Activated CD4-positive, alpha-beta T cell treated with anti-CD3 and anti-CD28 coated beads for 36 hours (primary cell): ENCODE measurements at regions of chr5 and their contacts with region 1.

Region 1: GRCh38 chr5:76269932-76270610 is 133.0 kb upstream of the IQGAP2 start:
- DNase-seq: peak; percentile 67
- ATAC-seq: peak; percentile 78
- H3K4me3 Mint-ChIP-seq: peak overlapping the region; percentile 52
- H3K27ac Mint-ChIP-seq: peak overlapping the region; percentile 96
- H3K4me1 Mint-ChIP-seq: peaks cover 40% of the 10 kb centered on the region
- H3K27me3 Mint-ChIP-seq: peaks cover 7% of the 10 kb centered on the region

Region 2: DNA sequence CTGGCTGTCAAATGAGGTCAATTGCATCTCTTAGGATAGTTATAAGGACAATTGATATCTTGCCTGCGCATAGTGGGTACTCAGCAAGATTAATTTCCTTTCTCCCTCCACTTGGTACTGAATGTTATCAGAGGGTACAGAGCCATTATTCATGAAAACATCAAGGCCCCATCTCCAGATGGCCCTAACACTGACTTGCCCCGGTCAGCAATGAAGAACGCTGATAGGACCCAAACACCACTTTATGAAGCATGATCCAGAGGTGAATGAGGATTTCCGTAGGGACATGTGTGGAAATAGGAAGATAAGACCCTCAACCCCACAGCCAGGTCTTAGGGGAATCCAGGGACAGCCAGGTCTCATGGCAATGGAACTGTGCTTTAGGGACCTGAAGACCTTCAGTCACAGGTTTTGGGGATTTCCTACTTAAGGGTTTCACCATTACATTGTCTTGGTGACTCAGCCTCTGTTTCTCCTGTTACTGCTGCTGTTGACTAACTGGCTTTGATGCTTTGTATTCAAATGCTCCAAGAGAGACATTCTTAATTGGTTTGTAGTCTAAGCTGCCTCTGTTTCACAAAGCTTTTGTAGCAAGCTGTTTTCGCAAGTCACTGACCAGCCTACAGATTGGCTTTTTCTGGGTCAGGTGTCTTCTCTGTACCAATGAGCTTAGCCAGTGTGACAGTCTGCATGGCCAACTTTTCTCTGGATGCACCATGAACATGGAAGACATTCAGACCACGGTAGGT is 97.7 kb after region 1 on chr5:
- CTCF ChIA-PET with region 1: no interaction called
- POLR2A ChIA-PET with region 1: no interaction called
- intact Hi-C with region 1: loop called in 1 of 2 experiments (anchors 1 kb)
- DNase-seq: peak; percentile 57
- ATAC-seq: peak; percentile 97
- H3K4me3 Mint-ChIP-seq: no peak overlapping the region
- H3K27ac Mint-ChIP-seq: peak overlapping the region; percentile 85
- H3K4me1 Mint-ChIP-seq: peaks cover 32% of the 10 kb centered on the region
- H3K27me3 Mint-ChIP-seq: no peaks in the 10 kb centered on the region

Region 3: DNA sequence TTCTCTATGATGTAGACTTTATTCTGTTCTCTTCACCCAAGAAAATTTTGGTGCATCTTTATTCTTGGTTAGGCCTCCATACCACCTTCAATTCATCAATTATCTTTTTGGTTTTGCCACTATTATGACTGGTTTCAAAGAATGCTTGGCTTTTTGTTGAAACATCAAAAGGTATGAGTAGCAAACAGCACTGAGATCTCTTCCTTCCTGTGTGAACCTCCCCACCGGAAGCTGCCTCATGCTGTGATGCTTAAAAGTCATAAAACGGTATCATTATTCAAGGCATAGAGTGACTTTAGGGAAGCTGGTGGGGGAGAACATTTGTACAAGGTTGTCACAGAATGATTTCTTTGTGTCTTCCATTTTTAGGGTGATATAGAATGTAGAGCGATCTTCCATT is 203.6 kb after region 1 on chr5:
- CTCF ChIA-PET with region 1: no interaction called
- POLR2A ChIA-PET with region 1: no interaction called
- intact Hi-C with region 1: loop called in 1 of 2 experiments (anchors 5 kb)
- DNase-seq: peak; percentile 82
- ATAC-seq: peak; percentile 87
- H3K4me3 Mint-ChIP-seq: peak overlapping the region; percentile 16
- H3K27ac Mint-ChIP-seq: peak overlapping the region; percentile 92
- H3K4me1 Mint-ChIP-seq: peaks cover 75% of the 10 kb centered on the region
- H3K27me3 Mint-ChIP-seq: no peaks in the 10 kb centered on the region

Region 4: DNA sequence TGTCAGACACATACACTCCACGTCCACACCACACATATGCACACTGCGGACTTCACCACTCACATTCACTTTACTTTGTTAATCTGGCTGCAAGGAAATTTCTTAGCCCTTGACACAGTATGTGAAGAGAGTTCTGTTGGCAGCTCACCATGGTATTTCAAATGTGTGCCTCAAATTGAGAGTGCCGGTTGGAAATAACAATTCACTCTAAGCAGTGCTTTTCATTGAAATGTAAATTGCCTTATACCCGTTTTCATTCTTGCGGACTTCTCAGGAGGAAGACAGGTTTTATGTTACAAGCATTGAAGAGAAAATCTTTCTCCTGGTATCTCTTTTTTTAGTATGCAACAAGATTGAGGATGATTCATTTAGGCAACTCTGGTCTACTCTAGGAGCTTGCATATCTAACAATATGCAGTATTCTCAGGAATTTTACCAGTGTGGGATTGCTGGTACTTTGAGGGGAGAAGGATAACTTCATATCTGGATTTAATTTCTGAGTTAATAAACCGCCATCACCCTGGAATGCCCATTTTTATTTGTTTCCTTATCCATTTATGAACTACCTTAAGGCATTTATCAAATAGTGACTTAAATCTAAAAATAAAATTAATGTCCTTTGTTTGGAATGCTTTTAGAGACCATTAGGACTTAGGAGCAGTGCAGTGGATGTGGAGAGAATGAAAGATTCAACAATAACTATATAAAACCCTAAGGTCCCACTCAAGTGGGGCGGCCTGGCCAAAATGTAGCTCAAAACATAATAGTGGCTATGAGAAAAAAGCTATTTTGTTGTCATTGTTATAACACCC is 220.0 kb after region 1 on chr5:
- CTCF ChIA-PET with region 1: no interaction called
- POLR2A ChIA-PET with region 1: no interaction called
- intact Hi-C with region 1: no loop called
- DNase-seq: no peak
- ATAC-seq: no peak
- H3K4me3 Mint-ChIP-seq: no peak overlapping the region
- H3K27ac Mint-ChIP-seq: peak overlapping the region; percentile 55
- H3K4me1 Mint-ChIP-seq: peaks cover 36% of the 10 kb centered on the region
- H3K27me3 Mint-ChIP-seq: no peaks in the 10 kb centered on the region